HEK293T (cell line): ENCODE measurements at regions of chr5 and their contacts with region 1.

Region 1: DNA sequence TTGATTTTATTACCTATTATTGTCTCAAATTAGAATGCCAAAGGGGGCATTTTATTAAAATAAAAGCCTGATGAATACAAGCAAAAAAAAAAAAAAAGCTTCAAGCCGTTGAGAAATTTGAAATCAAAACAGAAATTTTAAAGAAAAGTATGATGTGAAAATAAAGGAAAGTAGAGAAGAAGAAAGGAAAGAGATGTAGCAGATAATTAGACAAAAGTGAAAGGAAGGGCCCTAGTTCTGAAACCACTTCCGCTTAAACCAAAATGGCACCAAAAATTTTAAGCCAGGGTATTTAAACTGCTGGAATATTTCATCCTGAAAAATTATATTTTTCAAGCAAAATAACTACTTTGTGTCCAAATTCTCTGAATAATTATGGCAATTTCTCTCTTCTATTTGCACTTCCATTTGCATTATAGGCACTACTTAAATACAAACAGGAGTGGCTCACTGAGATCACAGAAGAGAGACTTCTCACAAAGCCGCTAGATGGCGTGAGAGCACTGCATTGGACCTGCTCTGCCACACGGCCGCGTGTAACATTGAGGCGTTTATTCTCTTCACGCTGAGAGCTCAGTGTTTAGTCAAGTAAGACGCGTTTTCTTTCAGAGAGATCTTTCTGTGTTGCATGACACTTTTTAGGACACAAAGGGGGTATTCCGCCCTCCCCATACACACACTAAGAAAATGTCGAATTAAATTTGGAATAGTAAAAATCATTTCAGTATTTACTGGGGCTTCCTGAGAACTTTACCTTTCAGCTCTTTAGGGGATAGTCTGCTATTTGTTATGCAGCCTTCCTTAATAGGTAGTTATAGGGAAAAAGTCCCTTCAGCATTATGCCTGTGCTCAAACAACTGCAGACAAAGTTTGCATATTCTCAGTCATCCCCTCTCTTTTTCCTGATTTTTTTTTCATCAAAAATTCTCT is 368.4 kb upstream of the CCNH start:
- DNase-seq: peak; percentile 63

Region 2: GRCh38 chr5:88045931-88046461 is 264.9 kb after region 1 on chr5:
- CTCF ChIA-PET with region 1: no interaction called
- POLR2A ChIA-PET with region 1: no interaction called
- DNase-seq: no peak

Region 3: GRCh38 chr5:88690409-88691229 is 909.5 kb after region 1 on chr5:
- CTCF ChIA-PET with region 1: interaction called, 22 read pairs
- POLR2A ChIA-PET with region 1: interaction called, 4 read pairs
- DNase-seq: peak; percentile 75